ENCODE measurements at regions of chr17 and their contacts with region 1.

Region 1: GRCh38 chr17:44919885-44920564 is 4.7 kb upstream of the GFAP start:
- DNase-seq: peak; percentile 89
- H3K4me3 ChIP-seq: no peak overlapping the region; a peak in 1 of 4 replicates
- H3K27ac ChIP-seq: no peak overlapping the region; a peak in 1 of 4 replicates
- H3K4me1 ChIP-seq: peaks cover 18 to 42% of the 10 kb centered on the region in 2 experiments; a peak in 3 of 4 replicates
- H3K27me3 ChIP-seq: no peaks in the 10 kb centered on the region
- CTCF ChIP-seq: peak; percentile 84
- EP300 ChIP-seq: no peak; a peak in 1 of 4 replicates
- RAD21 ChIP-seq: peak; percentile 98

Region 2: DNA sequence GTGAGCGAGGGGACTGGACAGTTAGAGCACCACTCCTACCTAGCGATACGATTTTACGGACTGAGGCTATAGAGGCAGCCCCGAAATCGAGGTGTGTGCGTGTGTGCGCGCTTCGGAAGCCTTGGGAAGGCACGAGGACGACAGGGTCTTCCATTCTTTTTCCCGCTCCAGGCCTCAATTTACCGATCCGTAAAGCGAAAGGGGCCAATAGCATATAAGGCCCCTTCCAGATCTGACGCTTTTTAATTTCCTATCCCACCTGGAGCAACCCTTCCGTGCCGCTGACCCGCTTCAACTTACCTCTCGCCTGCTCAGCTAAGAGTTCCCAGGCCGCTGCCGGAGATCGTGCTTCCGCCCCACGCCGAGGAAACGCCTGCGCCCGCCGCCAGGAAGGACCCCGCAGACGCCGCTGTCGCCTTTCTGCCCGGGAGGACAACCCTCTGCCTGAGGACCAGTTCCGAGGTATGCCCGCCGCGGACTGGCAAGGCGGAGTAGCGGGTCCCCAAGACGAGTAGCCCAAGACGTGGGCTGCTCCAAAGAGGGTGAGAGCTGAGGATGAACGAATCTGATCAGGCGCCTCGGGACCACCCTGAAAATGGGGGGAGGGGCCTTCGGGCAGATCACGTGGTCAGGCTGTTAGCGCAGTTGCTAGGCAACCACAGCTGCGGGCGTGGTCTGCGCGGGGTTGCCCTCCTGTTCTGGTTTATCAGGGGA is 20.8 kb before region 1 on chr17 and contains the start of gene EFTUD2:
- CTCF ChIA-PET with region 1: interaction called, 25 read pairs
- POLR2A ChIA-PET with region 1: no interaction called
- DNase-seq: peak; percentile 96
- H3K4me3 ChIP-seq: peak within 1 kb of the TSS; percentile 92 to 97
- H3K27ac ChIP-seq: peak within 1 kb of the TSS; percentile 94 to 99
- H3K4me1 ChIP-seq: peaks cover 6 to 23% of the 10 kb centered on the region in 2 experiments; a peak in 3 of 4 replicates
- H3K27me3 ChIP-seq: no peaks in the 10 kb centered on the region
- CTCF ChIP-seq: no peak
- EP300 ChIP-seq: no peak; a peak in 1 of 4 replicates
- RAD21 ChIP-seq: no peak
- polyA plus RNA-seq, gene EFTUD2: 79.9 and 82.9 TPM in 2 replicates

Region 3: GRCh38 chr17:44932496-44933097 is 12.6 kb after region 1 on chr17:
- CTCF ChIA-PET with region 1: interaction called, 22 read pairs
- POLR2A ChIA-PET with region 1: interaction called, 4 read pairs
- DNase-seq: peak; percentile 11
- H3K4me3 ChIP-seq: no peak overlapping the region
- H3K27ac ChIP-seq: no peak overlapping the region
- H3K4me1 ChIP-seq: peaks cover 0 to 21% of the 10 kb centered on the region in 2 experiments; a peak in 1 of 4 replicates
- H3K27me3 ChIP-seq: no peaks in the 10 kb centered on the region
- CTCF ChIP-seq: no peak
- EP300 ChIP-seq: no peak
- RAD21 ChIP-seq: no peak

Region 4: GRCh38 chr17:44947461-44948314 is 27.7 kb after region 1 on chr17 and contains the start of gene KIF18B:
- CTCF ChIA-PET with region 1: interaction called, 119 read pairs
- POLR2A ChIA-PET with region 1: no interaction called
- DNase-seq: peak; percentile 96
- H3K4me3 ChIP-seq: peak within 1 kb of the TSS; percentile 72 to 74
- H3K27ac ChIP-seq: peak within 1 kb of the TSS; percentile 61 to 82
- H3K4me1 ChIP-seq: peaks cover 0 to 6% of the 10 kb centered on the region in 2 experiments; a peak in 1 of 4 replicates
- H3K27me3 ChIP-seq: no peaks in the 10 kb centered on the region
- CTCF ChIP-seq: no peak
- EP300 ChIP-seq: no peak
- RAD21 ChIP-seq: peak; percentile 9; the same call in 1 of the 2 replicates
- polyA plus RNA-seq, gene KIF18B: 12.6 and 14.7 TPM in 2 replicates

Region 5: DNA sequence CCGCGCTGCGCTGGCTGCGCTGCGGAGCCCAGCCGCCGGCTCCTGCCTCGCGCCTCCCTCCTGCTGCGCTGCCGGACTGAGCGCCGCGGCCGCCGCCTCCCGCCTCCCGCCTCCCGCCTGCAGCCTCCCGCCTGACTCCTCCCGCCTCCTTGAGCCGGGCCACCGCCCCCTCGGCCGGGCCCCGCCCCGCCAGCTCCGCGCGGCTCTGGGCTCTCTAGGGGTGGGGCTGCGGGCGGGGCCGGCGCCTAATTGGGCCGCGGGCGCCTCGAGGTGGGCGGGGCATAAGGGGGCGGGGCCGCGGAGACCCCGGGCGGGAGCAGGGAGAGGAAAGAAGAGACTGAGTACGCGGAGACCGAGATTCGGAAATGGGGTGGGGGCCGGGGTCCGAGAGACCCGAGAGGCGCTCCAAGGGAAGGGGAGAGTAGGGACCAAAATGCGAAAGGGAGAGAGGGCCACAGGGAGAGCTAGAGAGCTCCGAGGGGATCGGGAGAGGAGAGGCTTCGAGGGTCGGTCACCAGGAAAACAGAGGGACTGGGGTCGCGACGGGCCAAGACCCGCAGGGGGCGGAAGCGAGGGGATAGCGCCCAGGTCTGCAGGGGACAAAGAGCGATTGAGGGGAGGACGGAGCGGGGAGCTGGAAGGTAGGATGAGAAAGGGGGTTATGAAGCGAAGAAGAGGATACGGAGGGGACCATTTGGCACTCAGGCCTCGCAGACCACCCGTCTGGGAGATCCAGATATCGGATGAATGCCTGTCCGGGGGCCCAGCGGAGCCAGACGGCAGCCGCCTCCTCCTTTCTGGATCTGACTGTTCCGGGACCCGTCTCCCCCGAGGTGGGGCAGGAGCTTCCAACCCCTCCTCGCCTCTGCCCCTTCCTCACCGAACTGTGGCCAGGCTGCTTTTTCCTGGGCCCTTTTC is 48.5 kb after region 1 on chr17 and contains the start of gene C1QL1:
- CTCF ChIA-PET with region 1: interaction called, 20 read pairs
- POLR2A ChIA-PET with region 1: interaction called, 4 read pairs
- DNase-seq: peak; percentile 100
- H3K4me3 ChIP-seq: peak within 1 kb of the TSS; percentile 36 to 57
- H3K27ac ChIP-seq: no peak within 1 kb of the TSS
- H3K4me1 ChIP-seq: peaks cover 0 to 25% of the 10 kb centered on the region in 2 experiments; a peak in 1 of 4 replicates
- H3K27me3 ChIP-seq: peaks cover 8% of the 10 kb centered on the region; the same call in 1 of the 2 replicates
- CTCF ChIP-seq: peak; percentile 14; the same call in 1 of the 2 replicates
- EP300 ChIP-seq: no peak
- RAD21 ChIP-seq: no peak
- polyA plus RNA-seq, gene C1QL1: 5.4 and 11.9 TPM in 2 replicates

Region 6: GRCh38 chr17:44995436-44996001 is 75.5 kb after region 1 on chr17:
- CTCF ChIA-PET with region 1: interaction called, 12 read pairs
- POLR2A ChIA-PET with region 1: no interaction called
- DNase-seq: no peak
- H3K4me3 ChIP-seq: no peak overlapping the region
- H3K27ac ChIP-seq: no peak overlapping the region
- H3K4me1 ChIP-seq: no peaks in the 10 kb centered on the region; a peak in 1 of 4 replicates
- H3K27me3 ChIP-seq: no peaks in the 10 kb centered on the region
- CTCF ChIP-seq: no peak
- EP300 ChIP-seq: no peak
- RAD21 ChIP-seq: no peak

Region 7: GRCh38 chr17:45031231-45032173 is 111.5 kb after region 1 on chr17:
- CTCF ChIA-PET with region 1: interaction called, 433 read pairs
- POLR2A ChIA-PET with region 1: interaction called, 4 read pairs
- DNase-seq: peak; percentile 90
- H3K4me3 ChIP-seq: no peak overlapping the region
- H3K27ac ChIP-seq: peak overlapping the region; percentile 42 to 96; a peak in 3 of 4 replicates
- H3K4me1 ChIP-seq: peaks cover 0 to 39% of the 10 kb centered on the region in 2 experiments; a peak in 2 of 4 replicates
- H3K27me3 ChIP-seq: no peaks in the 10 kb centered on the region
- CTCF ChIP-seq: no peak
- EP300 ChIP-seq: peak in 1 of 2 experiments; percentile 96; a peak in 2 of 4 replicates
- RAD21 ChIP-seq: peak; percentile 44; the same call in 1 of the 2 replicates

Region 8: DNA sequence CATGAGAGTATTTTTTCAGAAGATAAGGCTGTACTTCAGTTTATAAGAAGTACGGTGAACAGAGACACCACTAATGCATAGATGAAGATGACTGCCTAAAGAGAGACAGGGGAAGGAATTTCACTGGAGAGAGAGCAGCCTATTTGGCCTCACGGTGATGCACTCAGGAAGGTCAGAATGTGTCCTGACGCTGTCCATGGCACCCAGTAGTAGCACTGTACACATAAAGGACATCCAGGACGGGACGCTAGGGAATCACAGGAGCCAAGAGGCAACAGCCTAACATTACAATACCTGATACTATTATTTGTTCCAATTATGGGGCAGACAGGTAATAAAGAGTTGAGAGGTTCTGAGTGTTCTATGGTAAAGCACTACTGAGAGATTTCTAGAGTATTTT is 1350.0 kb after region 1 on chr17:
- CTCF ChIA-PET with region 1: no interaction called
- POLR2A ChIA-PET with region 1: no interaction called
- DNase-seq: no peak
- H3K4me3 ChIP-seq: no peak overlapping the region
- H3K27ac ChIP-seq: no peak overlapping the region
- H3K4me1 ChIP-seq: peaks cover 0 to 5% of the 10 kb centered on the region in 2 experiments; a peak in 1 of 4 replicates
- H3K27me3 ChIP-seq: no peaks in the 10 kb centered on the region
- CTCF ChIP-seq: no peak
- EP300 ChIP-seq: no peak
- RAD21 ChIP-seq: no peak